Ovary (tissue), 10 donors: ENCODE measurements at regions of chr1 and their contacts with region 1.

Region 1: DNA sequence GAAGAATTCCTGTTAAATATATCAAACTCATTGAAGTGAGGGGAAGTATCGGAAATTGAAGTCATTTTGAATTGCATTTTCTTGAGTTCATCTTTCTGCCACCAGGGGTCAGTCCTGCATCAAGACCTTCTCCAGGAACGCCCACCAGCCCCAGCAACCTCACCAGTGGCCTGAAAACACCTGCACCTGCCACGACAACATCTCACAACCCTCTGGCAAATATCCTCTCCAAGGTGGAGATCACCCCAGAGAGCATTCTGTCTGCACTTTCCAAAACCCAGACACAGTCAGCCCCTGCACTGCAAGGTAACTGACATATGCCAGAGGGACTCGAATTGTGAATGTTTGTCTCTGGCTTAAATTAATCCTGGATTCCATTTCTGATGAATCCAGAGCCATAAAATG is 22.8 kb upstream of the TARS2 start:
- DNase-seq: peak; percentile 38 to 66 (median 54)
- H3K4me3 ChIP-seq: no peak overlapping the region
- H3K27ac ChIP-seq: no peak overlapping the region
- H3K4me1 ChIP-seq: no peaks in the 10 kb centered on the region
- H3K27me3 ChIP-seq: no peaks in the 10 kb centered on the region
- CTCF ChIP-seq: peak; percentile 57 to 73 (median 68)
- EP300 ChIP-seq: no peak
- POLR2A ChIP-seq: no peak

Region 2: DNA sequence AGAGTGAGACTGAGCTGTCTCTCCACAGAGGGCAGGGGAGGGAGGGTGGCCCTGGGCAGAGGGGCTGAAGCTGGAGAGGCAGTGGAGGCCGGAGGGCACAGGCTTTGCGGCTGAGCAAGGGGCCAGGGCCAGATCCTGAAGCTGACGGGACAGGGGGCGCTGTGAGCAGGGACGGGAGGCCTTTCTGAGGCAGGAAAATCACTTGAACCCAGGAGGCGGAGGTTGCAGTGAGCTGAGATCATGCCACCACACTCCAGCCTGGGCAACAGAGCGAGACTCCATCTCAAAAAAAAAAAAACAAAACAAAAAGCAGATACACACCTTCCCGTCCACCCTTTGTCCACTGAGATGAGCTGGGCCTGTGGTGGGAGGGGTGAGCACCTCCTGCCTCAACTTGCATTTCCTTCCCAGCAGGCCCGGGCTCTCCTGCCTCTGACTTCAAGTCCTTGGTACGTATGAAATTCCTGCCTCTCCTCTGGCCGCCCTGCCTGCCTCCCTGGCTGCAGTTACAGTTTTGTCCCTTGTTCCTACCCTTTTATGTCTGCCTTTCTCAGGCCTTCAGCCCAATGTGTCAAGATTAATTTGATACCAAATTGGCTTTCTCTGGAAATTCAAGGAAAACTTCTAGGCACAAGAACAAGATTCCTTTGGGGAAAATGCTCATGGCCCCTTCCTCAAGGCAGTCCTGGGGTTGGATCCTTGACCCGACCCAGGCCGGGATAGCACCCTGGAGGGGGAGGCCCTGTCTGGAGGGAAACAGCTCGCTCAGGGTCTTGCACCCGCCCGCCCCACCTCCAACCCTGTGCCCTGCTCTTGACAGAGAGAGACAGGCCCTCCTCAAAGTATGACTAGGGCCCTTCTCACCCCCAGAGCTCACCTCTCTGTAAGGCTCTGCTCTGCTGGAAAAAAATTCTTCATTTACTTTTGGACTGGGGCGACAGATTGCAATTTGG is 73.6 kb after region 1 on chr1:
- intact Hi-C with region 1: loop called in 2 of 4 experiments (anchors 5 to 10 kb)
- DNase-seq: no peak
- H3K4me3 ChIP-seq: no peak overlapping the region
- H3K27ac ChIP-seq: no peak overlapping the region
- H3K4me1 ChIP-seq: no peaks in the 10 kb centered on the region
- H3K27me3 ChIP-seq: no peaks in the 10 kb centered on the region
- CTCF ChIP-seq: no peak
- EP300 ChIP-seq: no peak
- POLR2A ChIP-seq: no peak

Region 3: DNA sequence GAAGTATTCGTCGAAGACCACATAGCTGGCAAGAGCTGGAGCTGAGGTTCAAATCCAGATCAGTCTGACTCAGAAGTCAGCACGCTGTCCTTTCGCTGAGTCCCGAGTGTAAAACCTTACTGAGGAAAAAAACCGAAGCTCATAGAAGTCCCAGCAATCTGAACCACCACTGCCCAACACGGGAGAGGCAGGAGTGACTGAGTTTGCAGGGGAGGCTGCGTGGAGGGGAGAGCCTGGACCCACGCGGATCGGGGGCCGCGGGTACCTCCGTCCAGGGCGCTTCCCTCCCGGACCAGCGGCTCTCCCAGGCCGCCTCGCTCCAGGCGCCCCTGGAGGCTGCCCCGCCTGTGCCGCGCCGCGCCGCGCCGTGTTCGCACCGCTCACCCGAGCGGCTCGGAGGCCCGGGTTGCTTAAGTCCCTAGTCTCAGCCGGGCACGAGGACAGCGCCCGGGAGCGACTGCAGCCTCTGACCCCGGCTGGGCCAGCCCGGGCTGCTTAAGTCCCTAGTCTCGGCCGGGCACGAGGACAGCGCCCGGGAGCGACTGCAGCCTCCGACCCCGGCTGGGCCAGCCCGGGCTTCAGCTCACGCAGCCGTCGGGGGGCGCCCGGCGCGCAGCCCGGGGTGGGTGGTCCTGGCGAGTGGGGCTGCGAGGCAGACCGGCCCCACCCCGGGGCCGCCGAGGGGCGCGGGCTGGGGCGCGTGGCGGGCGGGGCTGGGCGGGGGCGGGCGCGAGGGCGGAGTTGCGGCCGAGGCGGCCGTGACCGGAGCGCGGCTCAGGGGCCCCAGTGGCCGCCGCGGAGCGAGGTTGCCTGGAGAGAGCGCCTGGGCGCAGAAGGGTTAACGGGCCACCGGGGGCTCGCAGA is 84.4 kb after region 1 on chr1 and contains the start of gene ADAMTSL4:
- intact Hi-C with region 1: no loop called
- DNase-seq: peak; percentile 61 to 73 (median 72)
- H3K4me3 ChIP-seq: peak within 1 kb of the TSS; percentile 59
- H3K27ac ChIP-seq: peak within 1 kb of the TSS; percentile 89 to 92
- H3K4me1 ChIP-seq: peaks cover 16% of the 10 kb centered on the region
- H3K27me3 ChIP-seq: no peaks in the 10 kb centered on the region
- CTCF ChIP-seq: peak in 1 of 3 donors; percentile 54
- EP300 ChIP-seq: no peak
- POLR2A ChIP-seq: peak; percentile 40
- total RNA-seq, gene ADAMTSL4: 11.6 to 86.6 (median 22.5) TPM

Region 4: DNA sequence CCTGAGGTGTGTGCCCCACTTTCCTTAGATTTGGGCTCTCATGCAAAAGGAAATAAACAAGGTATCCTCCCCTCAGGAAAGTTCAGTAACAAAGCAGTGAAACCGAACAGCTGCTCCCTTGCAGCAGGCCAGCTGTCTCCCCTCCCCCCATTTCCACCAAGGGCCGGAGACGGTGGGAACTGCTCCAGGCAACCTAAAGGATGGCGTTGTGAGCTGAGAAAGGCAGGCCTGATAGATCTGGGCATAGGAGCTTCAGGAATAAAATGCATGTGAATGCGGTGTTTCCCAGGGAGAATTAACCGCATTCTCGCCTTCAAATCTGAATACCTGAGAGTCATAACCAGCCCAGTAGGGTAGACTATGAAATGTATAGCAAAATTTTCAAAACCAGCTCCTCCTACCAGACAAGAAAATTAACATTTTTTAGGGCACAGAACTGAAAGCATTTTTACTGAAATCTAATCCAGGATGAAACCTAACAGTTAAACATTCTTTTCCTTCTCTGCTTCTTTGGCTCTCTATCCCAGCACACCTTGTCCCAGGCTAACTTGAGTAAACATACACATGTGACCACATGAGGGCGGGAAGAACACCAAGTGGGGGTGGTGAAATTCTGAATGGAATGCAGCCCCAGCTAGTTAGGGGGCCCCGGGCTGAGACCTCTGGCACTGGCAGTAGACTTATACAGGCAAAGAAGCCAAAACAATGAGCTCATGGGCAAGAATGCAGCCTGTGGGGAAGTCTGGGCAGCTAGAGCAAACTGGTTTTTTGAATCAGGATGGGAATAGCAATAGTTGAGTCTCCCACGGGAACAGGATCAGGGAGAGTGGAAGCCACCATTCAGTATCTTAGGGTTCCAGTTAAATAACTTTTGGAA is 103.5 kb after region 1 on chr1:
- intact Hi-C with region 1: no loop called
- DNase-seq: peak; percentile 84 to 94 (median 91)
- H3K4me3 ChIP-seq: peak overlapping the region; percentile 27
- H3K27ac ChIP-seq: peak overlapping the region; percentile 65 to 91
- H3K4me1 ChIP-seq: peaks cover 46% of the 10 kb centered on the region
- H3K27me3 ChIP-seq: no peaks in the 10 kb centered on the region
- CTCF ChIP-seq: no peak
- EP300 ChIP-seq: peak; percentile 83
- POLR2A ChIP-seq: no peak